Activated naive CD4-positive, alpha-beta T cell treated with anti-CD3 and anti-CD28 coated beads for 36 hours (primary cell): ENCODE measurements at regions of chr1 and their contacts with region 1.

Region 1: DNA sequence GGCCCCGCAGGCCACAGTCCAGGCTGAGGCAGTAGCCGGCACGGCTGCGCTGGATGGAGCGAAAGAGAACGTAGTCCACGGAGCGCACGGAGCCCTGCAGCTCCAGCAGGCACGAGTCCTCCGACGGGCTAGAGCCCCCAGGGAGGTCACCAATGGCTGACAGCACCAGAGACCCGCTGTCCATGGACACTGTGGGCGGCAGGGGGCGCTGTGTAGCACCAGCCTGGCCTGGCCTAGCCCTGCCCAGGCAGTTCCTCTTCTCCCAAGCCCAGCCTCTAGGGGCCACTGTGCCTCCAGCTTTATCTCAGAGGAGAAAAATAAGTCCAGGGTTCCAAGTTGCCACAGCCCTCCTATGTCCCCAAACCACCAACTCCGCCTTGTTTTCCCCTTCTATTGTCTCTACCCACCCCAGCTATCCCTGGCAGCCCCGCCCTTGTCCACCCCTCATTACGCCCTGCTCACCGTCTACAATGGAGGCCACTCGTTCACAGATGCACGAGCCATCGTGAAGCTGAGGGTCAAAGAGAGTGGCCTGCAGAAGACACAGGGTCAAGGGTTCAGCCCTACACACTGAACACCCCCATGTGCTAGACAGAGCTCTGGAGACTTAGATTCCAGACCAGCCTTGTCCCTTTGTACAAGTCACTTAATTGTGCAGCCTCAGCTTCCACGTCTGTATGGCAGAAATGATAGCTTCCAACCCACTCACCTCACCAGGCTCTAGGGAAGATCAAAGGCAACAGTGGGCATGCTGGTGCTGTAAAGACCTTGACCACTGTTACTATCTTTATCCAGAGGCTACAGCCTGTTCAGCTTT is 4.4 kb downstream of the ENTREP3 start:
- DNase-seq: peak; percentile 98
- H3K4me3 Mint-ChIP-seq: peak overlapping the region; percentile 47
- H3K27ac Mint-ChIP-seq: no peak overlapping the region
- H3K4me1 Mint-ChIP-seq: peaks cover 26% of the 10 kb centered on the region
- H3K27me3 Mint-ChIP-seq: no peaks in the 10 kb centered on the region

Region 2: GRCh38 chr1:154241703-154242351 is 1009.0 kb before region 1 on chr1:
- CTCF ChIA-PET with region 1: no interaction called
- intact Hi-C with region 1: no loop called
- DNase-seq: no peak
- H3K4me3 Mint-ChIP-seq: no peak overlapping the region
- H3K27ac Mint-ChIP-seq: peak overlapping the region; percentile 82
- H3K4me1 Mint-ChIP-seq: peaks cover 37% of the 10 kb centered on the region
- H3K27me3 Mint-ChIP-seq: no peaks in the 10 kb centered on the region

Region 3: GRCh38 chr1:155261852-155262673 is 11.2 kb after region 1 on chr1 and contains the start of gene SCAMP3:
- CTCF ChIA-PET with region 1: interaction called, 64 read pairs
- intact Hi-C with region 1: no loop called
- DNase-seq: peak; percentile 95
- H3K4me3 Mint-ChIP-seq: peak within 1 kb of the TSS; percentile 95
- H3K27ac Mint-ChIP-seq: peak within 1 kb of the TSS; percentile 93
- H3K4me1 Mint-ChIP-seq: peaks cover 27% of the 10 kb centered on the region
- H3K27me3 Mint-ChIP-seq: no peaks in the 10 kb centered on the region
- total RNA-seq, gene SCAMP3: 80.3 to 82.9 TPM

Region 4: GRCh38 chr1:155300553-155301329 is 49.9 kb after region 1 on chr1:
- CTCF ChIA-PET with region 1: interaction called, 12 read pairs
- intact Hi-C with region 1: no loop called
- DNase-seq: no peak
- H3K4me3 Mint-ChIP-seq: no peak overlapping the region
- H3K27ac Mint-ChIP-seq: no peak overlapping the region
- H3K4me1 Mint-ChIP-seq: no peaks in the 10 kb centered on the region
- H3K27me3 Mint-ChIP-seq: peaks cover 13% of the 10 kb centered on the region

Region 5: DNA sequence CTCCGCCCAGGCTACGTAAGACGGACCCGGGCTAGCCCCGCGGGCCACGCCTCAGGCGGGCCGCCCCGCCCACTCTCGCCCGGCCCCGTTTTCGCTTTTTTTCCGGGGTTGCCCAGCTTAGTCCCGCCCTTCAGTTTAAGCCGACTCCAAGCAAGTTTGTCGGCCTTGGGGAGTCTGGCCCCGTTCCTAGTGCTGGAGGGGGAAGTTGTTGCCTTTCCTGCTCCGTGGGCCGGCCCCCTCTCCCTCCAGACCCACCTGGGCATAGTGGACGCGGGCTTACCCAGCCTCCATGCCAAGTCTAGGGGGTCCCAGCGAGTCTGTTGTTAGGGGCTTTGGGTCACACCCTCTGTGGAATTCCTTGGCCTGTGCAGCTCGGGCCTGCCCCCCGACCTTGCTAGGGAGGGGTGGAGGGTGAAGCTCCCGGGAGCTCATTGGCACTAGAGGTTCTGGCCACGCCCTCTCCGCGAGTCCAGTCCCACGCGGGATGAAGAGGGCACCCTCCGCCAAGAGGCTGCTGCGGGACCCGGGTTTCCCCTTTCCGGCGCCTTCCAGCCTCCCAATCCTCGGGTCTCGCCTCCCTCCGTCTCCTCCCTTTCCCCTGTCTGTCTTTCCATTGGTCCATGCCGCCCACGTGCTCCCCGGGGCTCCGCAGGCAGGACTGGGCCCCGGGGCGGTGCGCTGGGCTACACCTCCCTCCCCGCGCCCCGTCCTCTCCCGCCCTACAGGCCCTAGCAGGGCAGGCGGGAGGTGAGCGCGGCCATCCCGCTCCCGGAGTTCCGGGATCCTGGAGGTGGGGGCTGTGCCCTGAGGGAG is 73.2 kb after region 1 on chr1:
- CTCF ChIA-PET with region 1: interaction called, 118 read pairs
- intact Hi-C with region 1: loop called (anchors 1 kb)
- DNase-seq: peak; percentile 96
- H3K4me3 Mint-ChIP-seq: peak overlapping the region; percentile 86
- H3K27ac Mint-ChIP-seq: peak overlapping the region; percentile 61
- H3K4me1 Mint-ChIP-seq: peaks cover 42% of the 10 kb centered on the region
- H3K27me3 Mint-ChIP-seq: peaks cover 2% of the 10 kb centered on the region

Region 6: GRCh38 chr1:155591770-155592169 is 340.9 kb after region 1 on chr1:
- CTCF ChIA-PET with region 1: interaction called, 24 read pairs
- intact Hi-C with region 1: loop called (anchors 1 kb)
- DNase-seq: peak; percentile 44
- H3K4me3 Mint-ChIP-seq: no peak overlapping the region
- H3K27ac Mint-ChIP-seq: no peak overlapping the region
- H3K4me1 Mint-ChIP-seq: no peaks in the 10 kb centered on the region
- H3K27me3 Mint-ChIP-seq: no peaks in the 10 kb centered on the region